Posterior vena cava (tissue), 2 donors: ENCODE measurements at regions of chr2 and their contacts with region 1.

Region 1: GRCh38 chr2:40281021-40281940 is 170.6 kb downstream of the SLC8A1 start:
- DNase-seq: no peak

Region 2: DNA sequence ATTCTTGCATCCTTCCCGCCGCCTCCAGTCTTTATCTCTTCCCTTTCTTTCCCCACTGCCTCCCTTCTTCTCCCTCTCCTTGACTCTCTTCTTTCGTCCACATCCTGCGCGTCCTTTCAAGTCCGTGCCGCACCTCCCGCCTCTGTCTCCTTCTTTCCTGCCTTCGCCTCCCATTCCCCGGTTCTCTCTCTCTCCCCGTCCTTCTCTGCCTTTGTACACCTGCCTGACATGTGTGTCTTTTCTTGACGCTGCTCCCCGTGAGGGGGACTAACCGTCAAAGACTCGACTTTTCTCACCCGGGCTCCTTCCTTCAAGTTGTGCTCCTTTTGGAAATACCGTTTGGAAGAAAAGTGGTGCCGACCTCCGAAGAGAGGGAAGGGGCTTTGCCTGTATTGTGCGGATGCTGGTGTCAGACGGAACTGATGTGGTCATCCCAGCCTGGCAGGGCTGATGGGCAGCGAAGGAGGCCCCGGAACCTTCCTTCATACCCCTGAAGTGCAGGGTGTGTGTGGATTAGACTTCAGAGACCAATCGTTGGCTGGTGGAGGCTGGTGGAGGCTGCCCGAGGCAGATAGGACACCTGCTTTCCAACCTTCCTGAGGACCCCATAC is 614.7 kb before region 1 on chr2:
- intact Hi-C with region 1: no loop called
- DNase-seq: no peak

Region 3: DNA sequence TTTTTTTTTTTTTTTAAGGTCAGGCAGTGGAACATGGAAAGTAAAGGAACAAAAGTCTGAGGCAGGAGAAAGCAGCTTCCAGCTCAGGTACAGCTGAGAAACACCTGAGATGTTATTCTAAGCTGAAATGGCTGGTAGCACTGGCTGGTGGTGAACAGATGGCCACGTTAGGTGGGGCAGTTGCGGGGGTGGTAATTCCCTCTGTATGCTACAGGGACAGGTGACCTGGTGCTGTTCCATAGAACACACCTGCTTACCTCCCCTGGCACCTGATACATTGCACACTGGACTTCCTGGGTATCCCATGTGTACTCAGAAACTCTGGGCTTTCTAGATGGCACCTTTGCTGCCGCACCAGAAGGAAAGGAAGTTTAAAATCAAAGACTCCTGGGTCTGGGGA is 162.7 kb before region 1 on chr2:
- intact Hi-C with region 1: loop called in 1 of 2 experiments (anchors 5 kb)
- DNase-seq: no peak

Region 4: DNA sequence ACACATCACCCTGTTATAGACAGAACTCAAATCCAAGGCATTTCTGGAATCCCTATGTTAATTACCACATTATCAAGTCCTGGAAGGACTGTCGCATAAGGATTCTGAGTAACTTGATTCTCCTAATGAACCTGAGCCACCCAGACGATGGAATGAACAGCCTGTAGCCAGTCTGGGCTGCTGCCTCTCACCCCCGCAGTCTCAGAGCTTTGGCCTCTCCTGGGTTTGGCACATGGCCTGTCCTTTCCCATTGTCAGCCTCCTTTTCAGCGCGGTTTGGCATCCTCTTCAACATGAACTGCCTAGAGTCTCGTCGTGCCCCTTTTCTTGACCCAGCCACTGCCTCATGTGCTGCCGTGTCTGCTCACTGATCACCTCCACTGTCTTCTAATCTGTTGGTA is 23.1 kb after region 1 on chr2:
- intact Hi-C with region 1: no loop called
- DNase-seq: peak; percentile 79

Region 5: DNA sequence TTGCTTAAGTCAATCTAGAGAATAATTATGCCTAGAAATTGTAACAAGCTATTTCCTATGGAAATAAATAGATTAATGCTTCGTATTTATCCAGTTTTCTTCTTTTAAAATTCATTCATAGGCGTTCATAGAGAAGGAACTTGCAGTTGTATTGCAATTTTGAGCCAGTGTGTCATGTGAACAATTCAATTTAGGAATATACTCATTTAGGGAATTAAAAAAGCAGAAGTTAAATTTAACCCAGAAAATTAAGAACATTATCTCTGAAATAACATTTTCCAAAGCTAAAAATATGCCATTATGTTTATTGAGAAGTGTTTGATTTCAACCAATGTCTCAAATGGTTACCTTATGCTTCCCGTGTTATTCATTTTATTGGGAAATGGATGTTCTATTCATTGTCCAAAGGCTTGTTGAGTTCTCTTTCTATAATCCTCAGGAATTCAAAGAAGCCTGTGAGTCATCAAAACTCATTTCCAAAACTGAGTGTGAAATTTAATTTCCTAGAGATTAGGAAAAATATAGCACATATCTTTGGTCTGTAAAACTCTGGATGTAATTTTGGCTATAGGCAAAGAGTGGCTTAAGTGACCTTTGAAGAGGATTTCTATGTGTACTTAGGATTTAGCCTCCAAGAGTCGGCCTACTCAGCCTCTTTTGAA is 70.9 kb after region 1 on chr2:
- intact Hi-C with region 1: loop called in 1 of 2 experiments (anchors 10 kb)
- DNase-seq: no peak

Region 6: GRCh38 chr2:40371525-40372282 is 90.4 kb after region 1 on chr2:
- intact Hi-C with region 1: no loop called
- DNase-seq: peak; percentile 87

Region 7: DNA sequence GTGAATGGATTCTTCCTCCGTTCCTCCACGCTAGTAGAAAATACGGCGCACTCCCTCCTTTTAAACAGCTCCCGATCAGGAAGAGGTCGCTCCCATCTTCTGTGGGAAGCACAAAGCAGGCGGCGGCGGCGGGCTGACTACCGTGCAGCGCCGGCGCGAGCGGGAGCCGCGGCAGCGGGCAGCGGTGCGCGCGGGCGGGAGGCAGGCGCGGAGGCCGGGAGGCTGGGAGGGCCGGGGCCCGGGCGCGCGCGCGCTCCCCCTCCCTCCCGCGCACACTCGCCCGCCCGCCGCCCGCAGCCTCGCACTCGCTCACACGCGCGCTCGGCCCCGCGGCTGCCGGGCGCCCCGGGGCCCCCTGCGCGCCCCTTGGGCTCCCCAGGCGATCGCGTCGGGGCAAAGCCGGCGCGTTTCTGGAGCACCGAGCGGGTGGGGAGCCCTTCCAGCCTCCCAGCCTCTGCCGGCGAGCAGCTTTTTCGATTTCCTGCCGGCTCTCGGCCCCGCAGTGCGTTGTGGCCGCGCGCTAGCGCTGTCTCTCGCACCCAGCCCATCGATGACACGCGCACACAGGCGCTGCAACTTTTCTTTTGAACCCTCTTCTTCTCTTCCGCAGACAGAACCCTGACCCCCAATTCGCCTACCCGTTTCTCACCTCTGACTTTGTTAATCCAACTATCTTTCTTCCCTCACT is 170.8 kb after region 1 on chr2 and contains the start of gene SLC8A1:
- intact Hi-C with region 1: loop called in 1 of 2 experiments (anchors 10 kb)
- DNase-seq: peak; percentile 78
- total RNA-seq, gene SLC8A1: 105 to 121 TPM

Region 8: GRCh38 chr2:40700223-40700924 is 419.1 kb after region 1 on chr2:
- intact Hi-C with region 1: loop called in 1 of 2 experiments (anchors 5 kb)
- DNase-seq: no peak